K562 (cell line): ENCODE measurements at regions of chr21 and their contacts with region 1.

Region 1: GRCh38 chr21:34745557-34746255 is 76.9 kb downstream of the CLIC6 start:
- DNase-seq: peak; percentile 78 to 89 (median 86)
- ATAC-seq: peak; percentile 99
- H3K4me3 ChIP-seq: no peak overlapping the region
- H3K27ac ChIP-seq: no peak overlapping the region
- H3K4me1 ChIP-seq: peaks cover 4 to 6% of the 10 kb centered on the region in 2 experiments; a peak in 3 of 5 replicates
- H3K27me3 ChIP-seq: peaks cover 9 to 36% of the 10 kb centered on the region in 2 experiments
- CTCF ChIP-seq: peak; percentile 98 to 99 (median 98)
- EP300 ChIP-seq: peak; percentile 46
- POLR2A ChIP-seq: no peak
- RAD21 ChIP-seq: peak; percentile 99

Region 2: GRCh38 chr21:35051287-35051818 is 305.6 kb after region 1 on chr21:
- CTCF ChIA-PET with region 1: no interaction called
- POLR2A ChIA-PET with region 1: no interaction called
- in situ Hi-C with region 1: no loop called
- intact Hi-C with region 1: loop called (anchors 5 kb)
- DNase-seq: peak; percentile 82 to 95 (median 88)
- ATAC-seq: peak; percentile 98
- H3K4me3 ChIP-seq: no peak overlapping the region
- H3K27ac ChIP-seq: peak overlapping the region; percentile 70
- H3K4me1 ChIP-seq: peaks cover 18 to 50% of the 10 kb centered on the region in 2 experiments
- H3K27me3 ChIP-seq: no peaks in the 10 kb centered on the region
- CTCF ChIP-seq: peak; percentile 87 to 90 (median 87)
- EP300 ChIP-seq: peak; percentile 55; the same call in 1 of the 2 replicates
- POLR2A ChIP-seq: 0 out of 2 replicates have a peak, but pooled peaks have one; percentile 45
- RAD21 ChIP-seq: peak; percentile 94 to 95

Region 3: GRCh38 chr21:35400233-35400957 is 654.7 kb after region 1 on chr21:
- CTCF ChIA-PET with region 1: interaction called, 4 read pairs
- POLR2A ChIA-PET with region 1: no interaction called
- in situ Hi-C with region 1: loop called (anchors 10 kb)
- intact Hi-C with region 1: loop called (anchors 5 kb)
- DNase-seq: peak; percentile 18 to 79 (median 38)
- ATAC-seq: peak; percentile 92
- H3K4me3 ChIP-seq: no peak overlapping the region
- H3K27ac ChIP-seq: no peak overlapping the region
- H3K4me1 ChIP-seq: peaks cover 0 to 15% of the 10 kb centered on the region in 2 experiments; a peak in 3 of 5 replicates
- H3K27me3 ChIP-seq: no peaks in the 10 kb centered on the region; a peak in 2 of 5 replicates
- CTCF ChIP-seq: peak; percentile 53 to 82 (median 70)
- EP300 ChIP-seq: peak; percentile 48; the same call in 1 of the 2 replicates
- POLR2A ChIP-seq: no peak
- RAD21 ChIP-seq: peak; percentile 97 to 98

Region 4: GRCh38 chr21:35940074-35940927 is 1194.6 kb after region 1 on chr21:
- CTCF ChIA-PET with region 1: no interaction called
- POLR2A ChIA-PET with region 1: no interaction called
- in situ Hi-C with region 1: no loop called
- intact Hi-C with region 1: loop called (anchors 1 kb)
- DNase-seq: peak in 3 of 4 experiments; percentile 17 to 70 (median 52)
- ATAC-seq: peak; percentile 94
- H3K4me3 ChIP-seq: no peak overlapping the region
- H3K27ac ChIP-seq: no peak overlapping the region
- H3K4me1 ChIP-seq: peaks cover 0 to under 1% of the 10 kb centered on the region in 2 experiments; a peak in 2 of 5 replicates
- H3K27me3 ChIP-seq: peaks cover 16 to 20% of the 10 kb centered on the region in 2 experiments
- CTCF ChIP-seq: peak; percentile 61 to 85 (median 76)
- EP300 ChIP-seq: no peak
- POLR2A ChIP-seq: no peak
- RAD21 ChIP-seq: peak; percentile 90 to 94